Posterior cingulate gyrus (tissue), 11 donors: ENCODE measurements at regions of chr1 and their contacts with region 1.

Region 1: DNA sequence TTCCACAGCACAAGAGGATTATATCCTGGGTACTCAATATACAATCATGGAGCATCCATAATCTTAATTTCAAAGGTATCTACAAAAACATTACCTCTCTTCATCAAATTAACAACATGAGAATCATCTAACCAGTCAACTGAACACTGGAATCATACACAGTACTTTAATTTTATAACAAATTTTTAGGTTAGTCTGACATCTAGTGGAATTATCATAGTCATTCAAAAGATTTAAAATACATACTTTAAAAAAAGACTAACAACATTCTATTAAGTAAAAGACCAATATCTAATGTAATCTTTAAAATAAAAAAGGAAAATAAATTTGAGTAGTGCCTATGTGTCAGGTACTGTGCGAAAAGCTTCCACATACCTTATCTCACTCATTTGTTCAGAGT is 16.8 kb upstream of the SH3GLB1 start:
- DNase-seq: no peak

Region 2: DNA sequence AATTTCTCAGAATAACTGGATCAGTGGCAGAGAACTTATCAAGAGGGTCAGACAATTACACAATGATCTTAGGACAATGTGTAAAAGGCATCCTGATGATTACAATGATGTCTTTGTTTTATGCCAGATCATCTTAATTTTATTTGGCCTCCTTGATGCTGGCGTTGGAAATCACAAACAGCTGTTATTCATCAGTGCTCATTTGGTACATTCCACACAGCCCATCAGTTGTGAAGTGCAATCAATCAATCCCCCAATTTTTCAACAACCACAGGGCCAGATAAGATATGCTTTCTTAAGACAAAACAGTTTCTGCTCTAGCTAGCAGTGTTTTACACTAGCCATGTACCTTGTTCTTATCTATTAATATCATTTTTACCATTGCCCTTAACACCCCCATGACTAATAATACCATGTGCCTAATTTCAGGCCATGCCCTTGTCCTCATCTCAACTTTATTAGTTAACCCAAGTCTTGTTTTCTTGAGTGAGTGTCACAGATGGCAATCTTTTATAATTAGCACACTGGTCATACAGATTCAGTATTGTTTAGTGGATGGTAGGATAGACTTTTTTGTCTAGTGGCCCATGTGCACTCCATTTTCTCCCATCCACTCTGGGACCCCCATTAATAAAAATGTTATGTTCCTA is 490.3 kb before region 1 on chr1:
- intact Hi-C with region 1: no loop called
- DNase-seq: no peak

Region 3: GRCh38 chr1:86515597-86515996 is 172.0 kb before region 1 on chr1:
- intact Hi-C with region 1: loop called (anchors 10 kb)
- DNase-seq: peak in 2 of 10 donors; percentile 68 to 88

Region 4: DNA sequence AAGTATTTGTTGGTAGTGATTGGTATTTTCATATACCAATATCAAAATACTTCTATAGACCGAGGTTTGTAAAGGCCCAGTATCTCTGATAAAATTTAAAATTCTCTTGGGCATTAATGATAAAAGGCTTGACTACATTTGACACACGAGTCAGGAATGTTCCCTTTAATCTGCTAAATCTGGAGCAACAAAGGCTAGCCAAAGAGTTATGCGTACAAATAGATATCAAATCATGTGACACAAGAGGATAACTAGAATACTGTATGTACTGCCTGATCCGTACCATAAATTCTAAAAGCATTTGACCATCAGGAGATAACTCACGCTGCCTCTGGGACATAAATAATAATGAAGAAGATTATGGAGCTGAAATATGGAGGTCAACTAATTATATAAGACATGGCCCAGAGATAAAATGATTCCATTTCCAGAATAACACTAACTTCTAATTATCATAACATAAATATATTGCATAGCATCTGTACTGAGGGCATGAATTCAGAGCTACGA is 47.4 kb before region 1 on chr1:
- intact Hi-C with region 1: no loop called
- DNase-seq: no peak